A549 (cell line): ENCODE measurements at regions of chr17 and their contacts with region 1.

Region 1: DNA sequence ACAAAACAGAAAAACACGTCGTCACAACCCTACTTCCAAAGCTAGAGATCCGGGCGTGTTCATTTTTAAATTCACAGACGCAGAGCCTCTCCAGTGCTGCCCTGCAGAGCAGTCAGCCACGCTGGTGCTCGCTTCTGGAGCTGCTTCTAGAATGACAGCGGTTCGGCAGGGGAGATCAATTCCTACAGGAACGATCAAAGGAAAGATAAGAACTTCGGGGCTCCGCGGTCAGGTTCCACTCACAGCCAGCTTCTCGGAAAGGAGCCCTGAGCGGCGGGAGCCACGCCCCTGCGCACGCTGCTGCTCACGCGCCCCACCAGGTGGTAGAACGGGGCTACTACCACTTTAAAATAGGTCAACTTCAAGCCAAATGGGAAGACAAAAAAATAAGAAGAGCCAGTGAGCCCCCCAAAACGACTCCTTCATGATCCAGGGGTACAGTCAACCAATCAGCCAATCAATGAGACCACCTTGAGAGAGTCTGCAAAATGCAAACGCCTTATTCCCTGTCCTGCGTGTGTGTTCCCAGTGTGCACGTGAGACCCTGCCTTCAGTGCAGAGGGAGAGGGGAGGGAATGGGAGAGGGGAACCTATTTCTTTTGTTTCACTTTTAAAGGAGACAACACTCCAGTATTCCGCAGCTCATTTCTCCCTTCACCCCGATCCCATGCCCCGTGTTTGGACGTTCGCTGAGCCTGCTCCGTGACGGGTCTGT is 209.7 kb downstream of the RBFOX3 start:
- DNase-seq: peak; percentile 69 to 94
- ATAC-seq: peak; percentile 71 to 89
- H3K4me3 ChIP-seq: peak overlapping the region; percentile 29
- H3K27ac ChIP-seq: peak overlapping the region; percentile 64 to 83
- H3K4me1 ChIP-seq: peaks cover 24% of the 10 kb centered on the region
- CTCF ChIP-seq: peak; percentile 81
- EP300 ChIP-seq: no peak
- POLR2A ChIP-seq: no peak
- RAD21 ChIP-seq: peak; percentile 53 to 57

Region 2: DNA sequence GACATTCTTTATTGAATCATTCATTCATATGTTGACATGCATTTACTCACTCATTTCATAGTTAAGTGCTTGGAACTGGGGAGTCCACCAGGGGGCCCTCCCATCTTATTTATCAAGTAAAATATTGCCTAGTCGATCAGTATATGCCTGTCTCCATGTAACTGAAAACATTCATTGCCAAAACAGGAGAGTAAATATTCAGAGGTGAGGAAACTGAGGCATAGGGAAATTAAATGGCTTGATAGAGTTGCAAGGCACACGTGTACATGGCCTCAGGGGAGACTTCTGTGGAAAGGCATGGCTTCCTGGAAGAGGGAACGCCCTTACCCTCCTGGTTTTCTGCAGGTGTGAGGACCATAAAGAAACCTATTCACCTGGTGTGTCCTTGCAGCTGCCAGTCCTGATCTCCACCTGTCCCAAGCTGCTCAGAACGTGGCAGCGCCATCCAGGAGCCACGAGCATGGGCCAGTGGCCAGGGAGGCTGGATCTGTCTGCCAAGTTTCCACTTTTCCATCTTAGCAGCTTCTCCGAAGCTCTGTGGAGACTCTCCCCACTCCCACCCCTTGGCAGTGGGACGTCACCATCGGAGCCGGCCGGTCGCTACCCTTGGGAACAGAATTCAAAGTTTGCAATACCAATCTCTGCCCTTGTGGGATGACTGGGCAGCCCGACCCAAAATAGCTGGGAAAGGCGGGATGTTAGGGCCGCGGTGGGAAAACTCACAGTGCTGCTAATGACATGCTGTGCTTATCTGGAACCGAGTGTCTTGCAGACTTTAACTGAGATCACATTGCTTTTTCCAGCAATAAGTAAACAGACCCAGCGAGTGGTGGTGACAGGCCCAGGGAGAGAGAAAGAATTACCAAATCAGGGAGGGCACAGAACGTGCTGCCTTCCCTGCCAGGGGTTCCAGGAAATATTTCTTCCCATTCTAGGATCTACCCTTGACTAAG is 381.2 kb before region 1 on chr17:
- CTCF ChIA-PET with region 1: interaction called, 10 read pairs
- POLR2A ChIA-PET with region 1: no interaction called
- DNase-seq: peak; percentile 71 to 82
- ATAC-seq: peak; percentile 48 to 62; a peak in 3 of 6 replicates
- H3K4me3 ChIP-seq: no peak overlapping the region
- H3K27ac ChIP-seq: peak overlapping the region; percentile 32 to 43; a peak in 4 of 6 replicates
- H3K4me1 ChIP-seq: peaks cover 15% of the 10 kb centered on the region
- CTCF ChIP-seq: peak; percentile 98
- EP300 ChIP-seq: no peak; a peak in 1 of 5 replicates
- POLR2A ChIP-seq: no peak
- RAD21 ChIP-seq: peak; percentile 91 to 96

Region 3: DNA sequence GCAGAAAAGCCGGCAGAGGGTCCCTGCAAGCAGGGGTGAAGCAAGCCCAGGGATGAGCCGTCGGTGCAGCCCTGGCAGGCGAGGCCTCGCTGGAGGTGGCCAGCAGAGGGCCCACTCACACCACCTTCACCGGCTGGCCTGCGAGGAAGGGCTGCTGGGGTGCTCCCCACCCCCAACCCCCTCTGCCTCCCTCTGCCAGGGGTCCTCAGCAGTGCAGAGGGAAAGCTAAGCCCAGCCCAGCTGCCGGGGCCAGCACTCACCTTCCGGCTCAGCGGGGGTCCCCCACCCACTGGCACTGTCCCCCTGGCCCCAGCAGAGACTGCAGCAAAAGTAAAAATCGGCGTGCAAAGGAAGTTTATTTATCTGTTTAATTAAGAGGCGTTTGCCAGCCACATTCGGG is 213.1 kb before region 1 on chr17:
- CTCF ChIA-PET with region 1: interaction called, 390 read pairs
- POLR2A ChIA-PET with region 1: no interaction called
- DNase-seq: peak; percentile 50 to 88
- ATAC-seq: peak; percentile 57 to 79; a peak in 4 of 6 replicates
- H3K4me3 ChIP-seq: no peak overlapping the region
- H3K27ac ChIP-seq: no peak overlapping the region
- H3K4me1 ChIP-seq: no peaks in the 10 kb centered on the region; the same call in 2 of the 3 replicates
- CTCF ChIP-seq: peak; percentile 88
- EP300 ChIP-seq: no peak
- POLR2A ChIP-seq: no peak
- RAD21 ChIP-seq: peak; percentile 82 to 94

Region 4: GRCh38 chr17:79275449-79275848 is 125.7 kb before region 1 on chr17:
- CTCF ChIA-PET with region 1: no interaction called
- POLR2A ChIA-PET with region 1: no interaction called
- DNase-seq: no peak
- ATAC-seq: no peak
- H3K4me3 ChIP-seq: no peak overlapping the region
- H3K27ac ChIP-seq: no peak overlapping the region
- H3K4me1 ChIP-seq: peaks cover 12% of the 10 kb centered on the region
- CTCF ChIP-seq: no peak
- EP300 ChIP-seq: no peak
- POLR2A ChIP-seq: no peak
- RAD21 ChIP-seq: no peak

Region 5: DNA sequence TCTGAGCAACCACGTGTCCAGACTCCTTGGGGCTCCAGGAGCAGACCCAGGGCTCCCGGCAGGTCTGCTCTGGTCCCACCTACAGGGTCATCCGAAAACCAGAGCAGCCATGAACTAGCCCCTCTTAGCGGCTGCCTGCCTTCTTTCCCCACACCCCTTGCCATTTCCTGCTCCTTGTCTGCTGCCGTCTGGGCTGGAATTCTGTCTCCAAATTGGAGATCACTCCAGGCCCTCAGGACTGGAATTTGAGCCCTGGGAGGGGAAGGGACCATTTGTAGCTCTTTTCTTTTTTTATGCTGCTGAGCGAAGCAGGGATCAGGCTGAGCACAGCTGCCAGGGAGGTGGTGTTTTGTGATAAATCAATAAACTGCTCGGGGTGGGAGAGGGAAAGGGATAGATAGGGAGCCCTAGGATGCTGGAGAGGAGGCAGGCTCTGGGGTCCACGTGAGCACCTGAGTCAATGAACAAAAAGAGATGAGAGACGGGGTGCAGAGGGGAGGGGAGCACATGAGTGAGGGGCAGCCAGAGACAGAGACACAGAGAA is 69.1 kb before region 1 on chr17:
- CTCF ChIA-PET with region 1: no interaction called
- POLR2A ChIA-PET with region 1: no interaction called
- DNase-seq: no peak
- ATAC-seq: no peak
- H3K4me3 ChIP-seq: no peak overlapping the region
- H3K27ac ChIP-seq: no peak overlapping the region
- H3K4me1 ChIP-seq: no peaks in the 10 kb centered on the region
- CTCF ChIP-seq: no peak
- EP300 ChIP-seq: no peak
- POLR2A ChIP-seq: no peak
- RAD21 ChIP-seq: no peak

Region 6: DNA sequence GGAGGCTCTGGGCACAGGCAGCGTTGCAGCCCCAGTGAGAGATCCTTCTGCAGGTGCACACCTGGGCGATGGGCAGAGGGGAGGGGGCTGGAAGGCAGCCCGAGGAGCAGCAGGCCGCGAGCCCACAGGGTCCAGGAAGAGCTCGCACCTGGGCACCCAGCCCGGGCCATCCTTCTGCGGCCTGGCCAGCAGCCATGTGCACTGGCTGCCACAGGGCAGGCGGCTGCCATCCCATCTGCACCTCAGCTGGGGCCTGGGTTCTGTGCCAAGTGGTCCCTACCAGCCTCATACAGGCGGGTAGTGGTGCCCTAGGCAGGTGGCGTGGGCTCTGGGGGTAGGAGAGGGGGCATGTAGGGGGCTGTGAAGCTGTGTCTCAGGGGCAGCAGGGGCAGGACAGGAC is 12.5 kb after region 1 on chr17:
- CTCF ChIA-PET with region 1: interaction called, 782 read pairs
- POLR2A ChIA-PET with region 1: no interaction called
- DNase-seq: no peak
- ATAC-seq: no peak
- H3K4me3 ChIP-seq: no peak overlapping the region
- H3K27ac ChIP-seq: peak overlapping the region in 1 of 2 experiments; percentile 36; a peak in 2 of 6 replicates
- H3K4me1 ChIP-seq: no peaks in the 10 kb centered on the region
- CTCF ChIP-seq: no peak
- EP300 ChIP-seq: no peak
- POLR2A ChIP-seq: no peak
- RAD21 ChIP-seq: no peak

Region 7: GRCh38 chr17:79420318-79421243 is 19.4 kb after region 1 on chr17:
- CTCF ChIA-PET with region 1: interaction called, 56 read pairs
- POLR2A ChIA-PET with region 1: no interaction called
- DNase-seq: peak; percentile 51 to 66
- ATAC-seq: peak; percentile 62 to 73
- H3K4me3 ChIP-seq: no peak overlapping the region
- H3K27ac ChIP-seq: peak overlapping the region; percentile 64 to 82
- H3K4me1 ChIP-seq: peaks cover 55% of the 10 kb centered on the region
- CTCF ChIP-seq: no peak
- EP300 ChIP-seq: no peak
- POLR2A ChIP-seq: no peak
- RAD21 ChIP-seq: no peak

Region 8: DNA sequence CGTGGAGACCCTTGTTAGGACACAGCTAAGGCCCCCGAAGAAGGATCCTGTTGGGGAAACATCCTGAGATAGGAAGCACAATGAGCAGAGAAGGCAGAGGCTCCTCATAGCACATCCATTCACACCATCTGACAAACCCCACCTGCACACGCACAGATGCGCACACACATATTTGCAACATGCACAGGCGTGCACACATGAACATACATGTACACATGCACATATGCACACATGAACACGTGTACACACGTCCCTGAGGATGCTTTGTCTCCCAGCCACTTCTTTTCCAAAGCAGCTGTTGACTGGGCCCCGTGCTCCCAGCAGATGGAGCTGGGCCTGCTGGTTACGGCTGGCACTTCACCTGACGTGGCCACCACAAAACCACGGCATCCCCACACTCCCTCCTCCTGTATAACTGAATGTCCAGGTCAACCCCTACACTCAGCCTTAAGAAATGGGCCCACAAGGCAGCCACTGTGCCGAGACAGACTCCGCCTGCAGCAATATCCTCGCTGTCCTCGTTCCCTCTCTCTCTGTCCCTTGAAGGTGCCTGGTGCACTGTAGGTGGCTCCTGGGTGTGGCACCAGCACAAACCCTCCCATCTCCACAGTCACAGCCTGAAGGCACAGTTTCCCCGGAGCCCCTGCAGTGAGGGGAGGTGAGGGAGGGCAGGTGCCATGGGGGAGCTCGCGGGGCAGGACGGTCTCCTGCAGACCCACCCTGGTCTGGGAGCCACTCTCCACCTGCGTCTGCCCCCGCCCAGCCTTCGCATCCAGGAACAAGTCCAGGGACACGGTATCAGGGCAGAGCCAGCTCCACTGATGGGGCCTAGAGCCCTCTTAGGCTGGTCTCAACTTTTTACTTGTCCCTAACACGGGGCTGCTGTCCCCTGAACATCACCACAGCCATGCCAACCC is 26.7 kb after region 1 on chr17:
- CTCF ChIA-PET with region 1: interaction called, 23 read pairs
- POLR2A ChIA-PET with region 1: no interaction called
- DNase-seq: peak in 1 of 2 experiments; percentile 44
- ATAC-seq: peak; percentile 4 to 20; a peak in 2 of 6 replicates
- H3K4me3 ChIP-seq: no peak overlapping the region
- H3K27ac ChIP-seq: peak overlapping the region; percentile 7 to 9; a peak in 3 of 6 replicates
- H3K4me1 ChIP-seq: peaks cover 35% of the 10 kb centered on the region
- CTCF ChIP-seq: no peak
- EP300 ChIP-seq: no peak
- POLR2A ChIP-seq: no peak
- RAD21 ChIP-seq: no peak

Region 9: DNA sequence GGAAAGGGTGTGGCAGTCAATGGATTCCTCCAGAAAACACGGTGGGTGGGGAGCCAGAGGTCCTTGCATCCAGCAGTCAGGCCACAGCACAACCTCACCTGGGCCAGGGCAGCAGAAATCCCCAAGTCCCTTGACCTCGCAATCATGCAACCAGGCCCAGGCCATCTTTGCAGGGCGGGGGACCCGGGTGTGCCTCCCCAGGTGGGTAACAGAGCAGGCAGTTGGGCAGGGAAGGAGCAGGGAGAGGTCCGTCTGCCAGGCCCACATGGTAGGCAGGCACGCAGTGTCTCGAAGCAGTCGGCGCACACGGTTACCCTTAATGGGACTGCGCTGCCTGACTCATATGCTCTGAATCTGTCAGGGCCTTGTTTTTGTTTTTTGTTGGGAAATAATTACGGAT is 56.7 kb after region 1 on chr17:
- CTCF ChIA-PET with region 1: no interaction called
- POLR2A ChIA-PET with region 1: no interaction called
- DNase-seq: no peak
- ATAC-seq: no peak
- H3K4me3 ChIP-seq: no peak overlapping the region
- H3K27ac ChIP-seq: peak overlapping the region; percentile 36 to 62; a peak in 2 of 6 replicates
- H3K4me1 ChIP-seq: peaks cover 28% of the 10 kb centered on the region
- CTCF ChIP-seq: no peak
- EP300 ChIP-seq: no peak
- POLR2A ChIP-seq: no peak
- RAD21 ChIP-seq: no peak

Region 10: DNA sequence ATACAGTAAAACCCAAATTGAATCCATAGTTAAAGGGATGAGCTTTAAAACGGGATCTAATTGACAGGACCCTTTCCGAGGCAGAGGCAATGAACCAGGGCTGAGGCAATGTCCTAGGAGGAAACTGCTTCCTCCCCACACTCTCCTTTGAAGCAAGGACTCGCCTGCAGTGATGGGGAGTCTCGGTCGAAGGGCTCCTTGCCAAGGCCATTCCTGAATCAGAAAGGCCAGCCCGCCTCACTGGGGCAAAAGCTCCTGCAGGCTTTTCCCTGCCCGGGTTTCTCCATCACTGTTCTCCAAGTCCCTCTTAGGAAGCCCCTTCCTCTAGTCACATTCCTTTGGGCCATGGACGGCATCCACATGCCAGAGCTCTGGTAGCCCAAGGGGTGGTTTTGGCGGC is 77.7 kb after region 1 on chr17:
- CTCF ChIA-PET with region 1: no interaction called
- POLR2A ChIA-PET with region 1: no interaction called
- DNase-seq: no peak
- ATAC-seq: no peak
- H3K4me3 ChIP-seq: no peak overlapping the region
- H3K27ac ChIP-seq: peak overlapping the region; percentile 28 to 78; a peak in 5 of 6 replicates
- H3K4me1 ChIP-seq: peaks cover 45% of the 10 kb centered on the region
- CTCF ChIP-seq: no peak
- EP300 ChIP-seq: no peak
- POLR2A ChIP-seq: no peak
- RAD21 ChIP-seq: no peak

Region 11: GRCh38 chr17:79707931-79708891 is 307.1 kb after region 1 on chr17:
- CTCF ChIA-PET with region 1: interaction called, 13 read pairs
- POLR2A ChIA-PET with region 1: no interaction called
- DNase-seq: peak; percentile 66 to 71
- ATAC-seq: peak; percentile 58 to 80
- H3K4me3 ChIP-seq: no peak overlapping the region
- H3K27ac ChIP-seq: peak overlapping the region; percentile 63 to 77; a peak in 5 of 6 replicates
- H3K4me1 ChIP-seq: peaks cover 17% of the 10 kb centered on the region
- CTCF ChIP-seq: peak; percentile 96
- EP300 ChIP-seq: no peak
- POLR2A ChIP-seq: no peak
- RAD21 ChIP-seq: peak; percentile 96 to 97